Endothelial cell of umbilical vein (primary cell): ENCODE measurements at regions of chr11 and their contacts with region 1.

Region 1: GRCh38 chr11:115324581-115325432 is 179.4 kb downstream of the CADM1 start:
- DNase-seq: peak; percentile 14
- H3K4me3 ChIP-seq: no peak overlapping the region
- H3K27ac ChIP-seq: no peak overlapping the region
- H3K4me1 ChIP-seq: no peaks in the 10 kb centered on the region
- H3K27me3 ChIP-seq: no peaks in the 10 kb centered on the region
- CTCF ChIP-seq: peak; percentile 50 to 63
- POLR2A ChIP-seq: no peak

Region 2: DNA sequence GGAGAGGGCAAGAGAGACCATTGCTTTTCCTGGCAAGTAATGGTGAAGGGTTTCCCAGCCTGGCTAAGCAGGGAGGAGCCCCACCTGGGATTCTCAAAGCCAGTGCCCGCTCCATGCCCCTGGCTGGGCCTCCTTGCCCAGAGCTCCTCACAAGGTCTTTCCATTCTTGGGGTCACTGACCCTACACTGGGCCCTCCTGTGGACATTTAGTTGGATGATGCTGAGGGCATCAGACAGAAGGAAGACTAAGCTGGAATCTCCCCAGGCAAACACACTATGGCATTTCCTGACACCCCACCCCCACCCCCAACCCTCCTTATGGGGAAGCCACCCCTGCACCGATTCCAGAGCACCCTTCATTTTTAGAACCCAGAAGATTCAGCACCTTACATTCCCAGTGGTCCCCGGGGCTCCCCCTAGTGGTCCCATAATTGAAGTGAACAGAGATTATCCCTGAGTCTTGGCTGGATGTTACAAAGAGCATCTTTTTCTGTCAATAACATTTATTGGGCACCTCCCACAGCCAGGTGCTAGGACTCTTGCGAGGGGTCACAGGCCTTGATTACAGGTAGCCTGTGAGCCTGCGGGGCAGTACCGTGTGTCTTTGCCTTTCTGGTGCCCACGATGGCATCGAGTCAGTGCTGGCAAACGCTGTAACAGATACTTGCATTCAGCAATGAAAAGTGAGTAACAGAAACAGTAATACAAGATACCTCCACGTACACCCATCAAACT is 899.5 kb after region 1 on chr11:
- CTCF ChIA-PET with region 1: interaction called, 3 read pairs
- POLR2A ChIA-PET with region 1: no interaction called
- dilution Hi-C with region 1: no loop called
- intact Hi-C with region 1: loop called (anchors 1 kb)
- DNase-seq: peak; percentile 34
- H3K4me3 ChIP-seq: no peak overlapping the region
- H3K27ac ChIP-seq: no peak overlapping the region
- H3K4me1 ChIP-seq: no peaks in the 10 kb centered on the region
- H3K27me3 ChIP-seq: no peaks in the 10 kb centered on the region
- CTCF ChIP-seq: peak; percentile 58 to 69
- POLR2A ChIP-seq: no peak